A673 (cell line): ENCODE measurements at regions of chr19 and their contacts with region 1.

Region 1: GRCh38 chr19:11549386-11549953 is 9.6 kb downstream of the ELOF1 start:
- DNase-seq: no peak
- H3K4me3 ChIP-seq: no peak overlapping the region
- H3K27ac ChIP-seq: no peak overlapping the region
- H3K4me1 ChIP-seq: no peaks in the 10 kb centered on the region
- H3K27me3 ChIP-seq: no peaks in the 10 kb centered on the region
- CTCF ChIP-seq: no peak

Region 2: GRCh38 chr19:11513946-11514345 is 35.5 kb before region 1 on chr19:
- CTCF ChIA-PET with region 1: interaction called, 3 read pairs
- POLR2A ChIA-PET with region 1: interaction called, 10 read pairs
- intact Hi-C with region 1: no loop called
- DNase-seq: no peak
- H3K4me3 ChIP-seq: no peak overlapping the region
- H3K27ac ChIP-seq: no peak overlapping the region
- H3K4me1 ChIP-seq: no peaks in the 10 kb centered on the region
- H3K27me3 ChIP-seq: no peaks in the 10 kb centered on the region
- CTCF ChIP-seq: no peak